Astrocyte of the cerebellum (primary cell): ENCODE measurements at regions of chr10 and their contacts with region 1.

Region 1: GRCh38 chr10:12823328-12823727 is 178.2 kb downstream of the CCDC3 start:
- DNase-seq: no peak
- H3K4me3 ChIP-seq: no peak overlapping the region
- CTCF ChIP-seq: no peak

Region 2: DNA sequence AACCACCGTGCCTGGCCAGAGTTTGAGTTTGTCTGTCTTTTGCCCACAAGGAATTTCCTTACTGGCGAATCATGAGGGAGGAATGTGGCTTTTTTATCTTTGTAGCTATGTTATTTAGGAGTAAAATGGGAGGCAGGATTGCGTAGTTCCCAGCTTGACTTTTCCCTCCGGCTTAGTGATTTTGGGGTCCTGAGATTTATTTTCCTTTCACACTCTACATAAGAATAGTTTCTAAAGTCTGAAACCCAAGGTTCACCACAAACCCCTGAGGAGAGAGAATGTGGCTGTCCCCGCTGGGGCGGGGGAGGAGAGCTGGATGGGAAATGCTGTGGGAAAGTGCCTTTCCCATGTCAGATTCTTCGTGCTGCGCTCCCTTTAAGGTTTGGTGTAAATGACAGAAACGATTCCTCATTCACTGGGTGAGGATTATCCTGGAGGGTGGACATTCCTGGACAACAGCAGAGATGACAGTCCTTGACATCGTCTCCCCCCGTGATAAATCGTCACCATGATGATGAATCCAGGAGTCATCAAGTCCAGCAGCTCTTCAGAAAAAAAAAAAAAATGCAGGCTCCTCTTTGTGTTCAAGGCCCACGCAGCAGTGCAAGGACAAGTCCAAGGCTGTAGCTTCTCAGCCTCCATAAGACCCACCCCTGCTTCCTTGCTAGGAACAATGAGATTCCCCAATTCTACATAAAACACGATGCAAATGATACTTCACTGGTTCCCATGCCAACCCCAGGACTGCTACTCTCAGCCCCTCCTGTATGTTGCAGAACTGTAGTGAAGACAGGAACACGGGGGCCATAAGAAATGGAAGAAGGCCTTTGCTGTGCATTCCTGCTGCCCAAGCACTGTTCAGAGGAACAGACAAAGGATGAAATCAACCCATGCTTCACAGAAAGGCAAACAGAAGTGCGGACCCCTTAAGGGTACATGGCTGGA is 54.9 kb before region 1 on chr10:
- in situ Hi-C with region 1: loop called (anchors 5 kb)
- DNase-seq: peak; percentile 69
- H3K4me3 ChIP-seq: no peak overlapping the region
- CTCF ChIP-seq: no peak

Region 3: DNA sequence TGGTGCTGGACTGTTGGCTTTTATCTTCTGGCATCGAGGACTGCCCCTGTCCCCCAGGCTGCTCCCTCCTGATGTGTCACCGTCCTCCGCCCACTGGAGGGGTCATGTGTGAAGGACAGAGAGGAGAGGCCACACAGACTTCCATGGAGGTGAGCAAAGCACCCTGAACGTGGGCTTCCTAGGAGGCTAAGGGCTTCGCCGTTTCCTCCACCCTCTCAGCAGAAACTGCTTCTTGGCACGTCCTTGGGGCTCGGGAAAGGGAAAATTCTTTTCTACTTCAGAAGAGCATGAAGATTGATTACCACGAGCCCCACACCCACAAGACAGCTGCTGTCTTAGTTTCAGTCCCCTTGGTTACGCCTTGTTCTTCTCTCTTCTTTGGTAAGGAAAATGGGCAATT is 40.0 kb before region 1 on chr10:
- in situ Hi-C with region 1: no loop called
- DNase-seq: no peak
- H3K4me3 ChIP-seq: no peak overlapping the region
- CTCF ChIP-seq: no peak

Region 4: DNA sequence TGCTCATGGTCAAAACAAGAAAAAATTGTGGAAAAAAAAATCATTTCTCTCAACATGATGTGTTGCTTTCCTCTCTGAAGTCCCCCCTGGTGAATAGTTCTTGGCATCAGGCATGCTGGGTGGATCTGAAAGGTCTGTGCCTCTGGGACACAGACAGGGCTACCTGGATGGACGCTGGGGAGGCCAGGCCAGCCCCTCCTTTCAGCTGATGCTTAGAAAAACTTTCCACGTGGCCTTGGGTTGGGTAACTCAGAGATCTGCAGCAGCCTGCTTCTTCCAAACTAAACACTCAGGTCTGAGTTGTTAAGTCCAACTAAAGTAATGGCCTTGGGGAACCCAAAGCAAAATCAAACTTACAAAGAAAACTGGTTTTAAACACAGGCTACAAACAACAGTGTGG is 65.1 kb after region 1 on chr10:
- in situ Hi-C with region 1: loop called (anchors 5 kb)
- DNase-seq: no peak
- H3K4me3 ChIP-seq: no peak overlapping the region
- CTCF ChIP-seq: no peak